GM10248 (cell line): ENCODE measurements at regions of chr11 and their contacts with region 1.

Region 1: DNA sequence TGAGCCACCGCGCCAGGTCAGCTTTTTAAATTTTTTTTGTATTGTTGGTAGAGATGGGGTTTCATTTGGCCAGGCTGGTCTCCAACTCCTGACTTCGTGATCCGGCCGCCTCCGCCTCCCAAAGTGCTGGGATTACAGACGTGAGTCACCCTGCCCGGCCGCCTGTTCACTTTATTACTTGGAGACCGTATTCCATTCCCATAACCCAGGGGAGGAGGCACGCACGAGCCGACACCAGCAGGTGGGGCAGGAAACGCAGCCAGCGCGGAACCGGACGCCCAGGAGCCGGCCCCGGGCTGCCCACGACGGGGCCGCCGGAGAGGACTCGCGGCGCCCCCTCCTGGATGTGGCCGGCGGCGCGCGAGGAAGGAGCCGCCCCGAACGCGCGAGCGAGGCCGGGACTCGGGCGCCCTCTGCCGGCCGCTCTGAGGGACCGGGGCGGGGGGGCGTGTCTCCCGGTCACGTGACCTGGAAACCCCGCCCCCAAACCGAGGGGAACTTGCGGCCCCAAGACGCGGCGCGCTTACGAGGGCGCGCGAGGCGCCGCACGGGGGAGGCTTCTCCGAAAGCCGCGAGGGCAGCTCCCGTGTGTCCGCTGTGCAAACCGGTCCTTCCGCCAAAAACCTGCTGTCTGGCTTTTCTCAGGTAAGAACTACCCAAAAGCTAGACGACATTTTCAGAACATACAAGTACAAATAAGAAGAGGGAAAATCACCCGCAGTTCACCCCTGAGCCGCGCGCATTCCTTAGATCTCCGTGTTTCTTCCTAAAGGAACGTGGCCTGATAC is 11.6 kb upstream of the RNH1 start:
- DNase-seq: peak; percentile 94
- CTCF ChIP-seq: peak; percentile 100

Region 2: GRCh38 chr11:382081-382629 is 136.5 kb before region 1 on chr11:
- CTCF ChIA-PET with region 1: no interaction called
- POLR2A ChIA-PET with region 1: no interaction called
- DNase-seq: no peak
- CTCF ChIP-seq: no peak

Region 3: DNA sequence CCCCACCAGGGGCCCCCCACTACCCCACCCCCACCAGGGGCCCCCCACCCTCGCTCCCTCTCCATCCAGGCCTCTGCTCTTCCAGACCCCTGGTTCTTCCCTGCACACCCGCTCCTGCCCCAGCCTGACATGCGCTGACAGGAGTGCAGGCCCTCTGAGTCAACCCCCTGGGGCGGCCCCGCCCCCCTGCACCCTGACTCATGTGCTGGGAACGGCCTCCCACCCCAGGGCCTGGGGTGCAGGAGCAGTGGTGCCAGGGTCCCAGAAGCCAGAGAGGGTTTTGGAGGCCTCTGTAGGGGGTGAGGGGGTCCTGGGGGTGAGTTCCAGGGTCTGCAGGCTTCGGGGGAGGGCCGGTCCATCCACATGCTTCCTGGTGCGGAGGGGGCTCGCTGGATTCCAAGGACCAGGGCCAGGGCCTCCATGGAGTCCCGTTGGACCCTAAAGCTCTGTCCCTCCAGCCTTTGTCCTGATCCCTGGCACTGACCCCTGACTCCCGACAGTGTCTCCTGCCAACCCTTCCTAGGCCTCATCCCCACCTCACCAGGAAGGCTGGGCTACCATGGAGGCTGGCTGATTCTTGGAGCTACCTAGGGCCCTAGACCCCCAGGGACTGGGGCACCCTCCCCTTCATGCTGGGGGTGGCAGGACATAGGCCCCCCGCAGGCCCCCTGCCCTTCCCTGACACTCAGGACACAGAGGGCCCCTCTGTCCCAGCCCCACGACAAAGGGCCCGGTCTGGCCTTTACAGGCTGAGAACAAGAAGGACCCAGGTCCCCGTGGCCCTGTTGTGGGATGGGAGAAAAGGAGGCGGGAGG is 125.2 kb before region 1 on chr11:
- CTCF ChIA-PET with region 1: no interaction called
- POLR2A ChIA-PET with region 1: no interaction called
- DNase-seq: no peak
- CTCF ChIP-seq: no peak

Region 4: DNA sequence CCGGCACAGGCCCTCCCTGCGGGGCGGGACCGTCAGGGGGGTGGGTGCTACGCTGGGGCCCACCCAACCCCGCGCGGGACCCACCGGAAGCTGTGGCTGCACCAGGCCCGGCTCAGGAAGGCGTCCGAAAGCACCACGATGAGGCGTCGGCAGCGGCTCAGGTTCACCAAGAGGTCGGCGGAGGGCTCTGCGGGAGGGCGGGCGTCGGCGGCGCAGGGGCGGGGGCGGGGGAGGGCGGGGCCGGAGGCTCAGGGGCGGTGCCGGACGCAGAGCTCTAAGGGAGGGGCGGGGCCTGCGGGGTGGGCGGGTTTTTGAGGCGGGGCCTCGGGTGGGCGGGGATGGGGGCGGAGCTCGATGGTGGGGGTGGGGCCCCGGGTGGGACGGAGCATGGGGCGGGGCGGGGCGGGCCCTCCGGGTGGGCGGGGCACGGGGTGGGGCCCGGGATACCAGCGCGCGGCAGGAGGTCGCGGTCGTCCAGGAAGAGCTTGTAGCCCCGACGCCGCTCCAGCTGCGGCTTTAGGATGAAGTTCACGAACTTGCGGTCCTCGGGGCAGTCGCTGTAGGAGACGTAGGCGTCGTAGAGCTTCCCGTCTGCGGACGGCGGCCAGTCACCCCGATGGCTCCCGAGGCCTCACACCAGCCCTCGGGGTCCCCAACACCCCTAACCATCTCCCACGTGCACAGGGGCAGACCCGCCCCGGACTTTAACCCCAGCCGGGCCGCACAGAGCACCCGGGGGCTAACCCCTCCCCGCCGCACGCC is 111.5 kb before region 1 on chr11:
- CTCF ChIA-PET with region 1: interaction called, 10 read pairs
- POLR2A ChIA-PET with region 1: no interaction called
- DNase-seq: peak; percentile 95
- CTCF ChIP-seq: no peak

Region 5: DNA sequence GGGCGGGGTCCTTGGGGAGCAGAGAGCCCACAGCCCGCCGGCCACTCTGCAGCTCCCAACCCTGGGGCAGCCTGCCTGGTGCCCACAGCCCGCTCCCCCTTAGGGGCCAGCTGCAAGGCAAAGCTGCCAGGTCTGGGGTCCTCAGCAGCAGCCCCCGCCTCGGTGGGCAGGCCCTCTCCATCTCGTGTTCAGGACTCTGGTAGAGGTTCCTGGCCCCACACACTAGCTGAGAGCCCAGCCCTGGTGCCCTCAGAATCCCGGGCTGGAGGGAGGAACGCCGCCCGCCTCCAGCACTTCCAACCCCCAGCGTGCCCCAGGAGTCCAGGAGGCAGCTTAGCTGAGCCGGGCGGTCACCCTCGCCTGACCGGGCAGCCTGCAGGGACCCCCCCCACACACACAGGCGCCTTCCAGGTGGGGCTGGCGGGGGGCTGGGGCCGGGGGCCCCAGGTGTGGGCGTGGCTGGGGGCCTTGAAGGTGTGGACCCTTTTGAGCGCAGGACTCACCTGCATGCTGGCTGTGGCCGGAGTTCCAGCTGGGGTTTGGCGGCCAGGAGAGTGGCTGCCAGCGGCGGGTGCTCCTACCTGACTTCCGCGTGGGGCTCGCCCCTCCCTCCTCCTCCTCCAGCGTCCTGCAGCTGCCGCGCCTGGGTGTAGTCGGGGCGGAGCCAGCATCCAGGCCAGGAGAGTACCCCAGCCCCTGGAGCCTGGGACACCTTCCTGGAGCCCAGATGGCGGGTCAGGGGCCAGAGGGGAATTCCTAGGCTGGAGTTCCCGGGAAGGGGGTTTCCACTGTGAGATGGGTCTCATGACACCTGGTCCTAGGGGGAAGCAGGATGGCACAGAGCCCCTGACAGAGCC is 77.0 kb before region 1 on chr11 and contains the start of gene ANO9:
- CTCF ChIA-PET with region 1: interaction called, 11 read pairs
- POLR2A ChIA-PET with region 1: no interaction called
- DNase-seq: peak; percentile 90
- CTCF ChIP-seq: no peak

Region 6: DNA sequence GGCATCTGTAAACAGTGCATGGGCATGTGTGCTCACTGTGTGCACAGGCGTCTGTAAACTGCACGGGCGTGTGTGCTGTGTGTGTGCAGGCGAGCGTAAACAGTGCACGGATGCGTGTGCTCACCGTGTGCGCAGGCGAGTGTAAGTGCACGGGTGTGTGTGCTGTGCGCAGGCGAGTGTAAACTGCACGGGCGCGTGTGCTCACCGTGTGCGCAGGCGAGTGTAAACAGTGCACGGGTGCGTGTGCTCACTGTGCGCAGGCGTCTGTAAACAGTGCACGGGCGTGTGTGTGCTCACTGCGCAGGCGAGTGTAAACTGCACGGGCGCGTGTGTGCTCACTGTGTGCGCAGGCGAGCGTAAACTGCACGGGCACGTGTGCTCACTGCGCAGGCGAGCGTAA is 34.0 kb before region 1 on chr11:
- CTCF ChIA-PET with region 1: no interaction called
- POLR2A ChIA-PET with region 1: no interaction called
- DNase-seq: no peak
- CTCF ChIP-seq: no peak

Region 7: DNA sequence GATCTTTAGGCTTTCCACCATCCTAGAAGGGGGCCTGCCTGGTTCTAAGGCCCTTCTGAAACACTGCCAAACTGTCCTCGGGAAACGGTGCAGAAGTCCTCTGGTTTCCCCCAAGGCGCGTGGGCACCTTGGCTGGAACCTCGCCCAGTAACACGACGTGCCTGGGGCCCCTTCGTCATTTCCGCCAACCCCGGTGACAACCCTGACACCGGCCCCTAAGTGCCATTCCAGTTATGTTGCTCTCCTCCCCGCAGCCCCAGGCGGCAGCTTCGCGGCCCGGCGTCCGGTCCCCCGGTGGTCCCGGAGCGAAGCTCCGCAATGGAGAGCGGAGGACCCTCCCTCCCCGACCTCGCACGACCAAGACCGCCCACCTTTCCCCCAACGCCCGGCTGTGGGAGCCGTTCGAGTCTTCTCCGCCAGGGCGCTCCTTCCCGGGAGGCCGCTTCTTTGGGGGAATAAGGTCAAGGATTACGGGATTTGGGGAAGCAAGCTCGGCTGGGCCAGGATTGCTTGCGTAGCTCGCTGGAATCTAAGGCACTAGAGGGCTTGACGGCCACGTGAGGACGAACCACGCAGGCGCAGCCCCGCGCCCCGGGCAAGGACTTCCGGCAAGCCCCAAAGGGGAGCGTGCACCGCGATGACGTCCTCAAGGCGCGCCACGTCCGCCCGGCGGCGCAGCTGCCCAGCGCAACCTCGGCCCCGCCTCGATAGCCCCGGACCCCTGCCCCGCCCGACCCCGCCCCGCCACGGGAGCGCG is 12.2 kb before region 1 on chr11:
- CTCF ChIA-PET with region 1: interaction called, 55 read pairs
- POLR2A ChIA-PET with region 1: interaction called, 3 read pairs
- DNase-seq: peak; percentile 99
- CTCF ChIP-seq: no peak

Region 8: GRCh38 chr11:528815-529599 is 10.3 kb after region 1 on chr11:
- CTCF ChIA-PET with region 1: interaction called, 77 read pairs
- POLR2A ChIA-PET with region 1: no interaction called
- DNase-seq: no peak
- CTCF ChIP-seq: no peak

Region 9: DNA sequence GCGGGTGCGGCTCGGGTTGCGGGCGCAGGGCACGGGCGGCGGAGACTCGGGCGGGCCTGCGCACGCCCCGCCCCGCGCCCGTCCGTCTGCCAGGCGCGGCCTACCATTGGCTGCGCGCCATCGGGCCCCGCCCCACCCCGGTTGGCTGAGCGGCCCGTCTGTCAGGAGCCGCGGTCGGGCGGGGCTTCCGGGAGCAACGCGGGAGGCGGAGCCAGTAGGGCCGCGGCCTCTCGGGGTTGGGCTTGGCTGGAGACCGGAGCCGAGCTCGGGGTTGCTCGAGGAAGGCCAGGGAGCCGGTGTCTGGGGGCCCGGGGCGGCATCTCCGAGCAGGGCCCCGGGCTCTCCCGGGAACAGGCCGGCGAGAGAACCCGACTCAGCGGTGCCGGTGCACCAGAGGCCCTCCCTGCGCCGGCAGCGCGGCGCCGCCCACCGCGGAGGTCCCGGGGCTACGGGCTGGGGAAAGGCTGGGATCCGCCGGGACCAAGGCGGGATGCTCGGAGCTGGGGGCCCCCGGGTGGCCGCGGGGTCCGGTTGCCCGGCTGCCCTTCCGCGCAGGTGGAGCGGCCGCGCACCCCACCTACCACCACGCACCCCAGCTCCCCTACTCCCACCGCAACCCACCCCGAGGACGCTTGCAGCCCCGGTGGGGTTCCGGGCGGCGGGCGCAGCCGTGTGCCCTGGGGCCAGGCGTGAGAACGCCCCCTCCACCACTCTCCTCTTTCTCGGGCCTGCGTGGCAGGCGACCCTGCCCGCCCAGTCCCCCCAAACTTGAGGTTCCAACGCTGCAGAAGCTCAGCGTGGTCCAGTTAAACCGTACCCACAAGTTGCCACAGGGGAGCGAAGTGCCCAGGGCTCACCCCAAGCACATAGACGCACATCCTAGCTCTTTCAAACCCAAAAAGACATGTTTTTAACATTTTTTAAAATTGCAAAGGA is 17.1 kb after region 1 on chr11 and contains the start of gene HRAS:
- CTCF ChIA-PET with region 1: interaction called, 77 read pairs
- POLR2A ChIA-PET with region 1: no interaction called
- DNase-seq: peak; percentile 100
- CTCF ChIP-seq: no peak

Region 10: DNA sequence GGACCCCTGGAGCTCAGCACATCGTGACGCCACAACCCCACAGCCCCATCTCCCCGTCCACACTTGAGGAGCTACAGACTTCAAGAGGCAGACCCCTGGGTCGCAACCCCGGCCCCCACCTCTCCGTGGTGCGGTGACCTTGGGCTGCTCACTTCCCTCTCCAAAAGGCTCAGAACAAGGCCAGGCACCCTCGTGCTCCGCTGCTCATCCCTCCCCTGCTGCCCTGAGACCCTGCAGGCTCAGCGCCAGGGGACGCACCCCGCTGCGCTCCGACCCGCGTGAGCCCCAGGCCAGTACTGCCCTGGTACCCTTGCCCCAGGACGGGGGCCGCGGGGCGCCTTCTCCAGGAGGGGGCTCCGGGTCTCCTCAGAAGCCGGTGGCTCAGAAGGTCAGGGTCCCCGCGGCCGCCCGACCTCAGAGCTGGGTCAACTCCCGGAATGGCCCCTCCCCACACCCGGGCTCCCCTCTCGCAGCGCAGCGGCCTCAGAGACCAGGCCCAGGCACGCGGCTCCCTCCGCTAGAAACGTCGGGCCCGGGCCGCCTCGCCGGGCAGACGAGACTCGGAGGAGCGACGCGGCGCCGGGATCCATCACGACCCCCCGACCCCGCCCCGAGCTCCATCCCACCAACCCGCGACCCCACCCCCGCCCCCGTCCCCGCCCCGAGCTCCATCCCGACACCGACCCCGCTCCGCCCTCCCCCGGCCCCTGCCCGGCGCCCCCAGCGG is 258.1 kb after region 1 on chr11:
- CTCF ChIA-PET with region 1: no interaction called
- POLR2A ChIA-PET with region 1: no interaction called
- DNase-seq: peak; percentile 39
- CTCF ChIP-seq: no peak